Stomach (tissue), 19 donors: ENCODE measurements at regions of chr6 and their contacts with region 1.

Region 1: DNA sequence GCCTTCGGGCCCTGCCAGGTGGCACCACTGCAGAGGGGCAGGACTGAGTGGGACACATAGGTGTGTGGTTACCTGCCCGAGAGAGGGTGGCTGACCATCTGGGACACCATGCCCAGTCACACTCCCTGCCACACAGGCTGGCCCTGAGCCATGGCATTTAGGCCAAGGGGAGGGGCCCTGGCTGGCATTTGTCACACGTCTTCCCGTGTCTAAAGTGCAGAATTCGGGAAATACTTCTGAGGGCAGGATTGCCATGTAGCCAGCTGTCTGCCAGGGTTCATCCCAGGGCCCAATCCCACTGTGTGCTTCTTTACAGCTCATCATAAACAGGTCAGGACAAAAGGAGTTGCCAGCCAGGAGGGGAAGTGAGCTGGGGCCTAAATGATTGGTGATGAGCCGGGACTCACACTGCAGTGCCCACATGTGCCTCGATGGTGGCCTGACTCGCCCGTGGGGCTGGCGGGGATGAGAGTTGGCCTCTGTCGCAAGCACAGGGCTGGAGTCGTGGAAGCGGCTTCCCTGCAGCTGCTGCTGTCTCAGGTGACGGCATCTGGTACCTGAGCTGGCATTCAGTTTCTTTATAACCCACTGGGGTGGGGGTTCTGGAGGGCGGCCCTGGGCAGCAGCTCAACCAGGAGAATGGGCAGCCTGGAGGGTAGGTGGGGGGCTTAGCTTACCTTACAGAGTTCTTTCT is 5.9 kb upstream of the UNC93A start:
- DNase-seq: peak in 1 of 2 donors; percentile 54
- H3K4me3 ChIP-seq: no peak overlapping the region
- H3K27ac ChIP-seq: no peak overlapping the region
- H3K4me1 ChIP-seq: peaks cover 0 to 3% (median 0%) of the 10 kb centered on the region in 4 donors
- H3K27me3 ChIP-seq: peaks cover 0 to 5% (median 0%) of the 10 kb centered on the region in 3 donors
- CTCF ChIP-seq: no peak
- EP300 ChIP-seq: no peak
- POLR2A ChIP-seq: no peak

Region 2: GRCh38 chr6:167219967-167220512 is 65.2 kb before region 1 on chr6:
- intact Hi-C with region 1: loop called (anchors 10 kb)
- DNase-seq: no peak
- H3K4me3 ChIP-seq: no peak overlapping the region
- H3K27ac ChIP-seq: no peak overlapping the region
- H3K4me1 ChIP-seq: peaks cover 0 to 5% (median 2%) of the 10 kb centered on the region in 4 donors
- H3K27me3 ChIP-seq: no peaks in the 10 kb centered on the region
- CTCF ChIP-seq: no peak
- EP300 ChIP-seq: no peak
- POLR2A ChIP-seq: no peak